T-cell (primary cell): ENCODE measurements at regions of chr1 and their contacts with region 1.

Region 1: DNA sequence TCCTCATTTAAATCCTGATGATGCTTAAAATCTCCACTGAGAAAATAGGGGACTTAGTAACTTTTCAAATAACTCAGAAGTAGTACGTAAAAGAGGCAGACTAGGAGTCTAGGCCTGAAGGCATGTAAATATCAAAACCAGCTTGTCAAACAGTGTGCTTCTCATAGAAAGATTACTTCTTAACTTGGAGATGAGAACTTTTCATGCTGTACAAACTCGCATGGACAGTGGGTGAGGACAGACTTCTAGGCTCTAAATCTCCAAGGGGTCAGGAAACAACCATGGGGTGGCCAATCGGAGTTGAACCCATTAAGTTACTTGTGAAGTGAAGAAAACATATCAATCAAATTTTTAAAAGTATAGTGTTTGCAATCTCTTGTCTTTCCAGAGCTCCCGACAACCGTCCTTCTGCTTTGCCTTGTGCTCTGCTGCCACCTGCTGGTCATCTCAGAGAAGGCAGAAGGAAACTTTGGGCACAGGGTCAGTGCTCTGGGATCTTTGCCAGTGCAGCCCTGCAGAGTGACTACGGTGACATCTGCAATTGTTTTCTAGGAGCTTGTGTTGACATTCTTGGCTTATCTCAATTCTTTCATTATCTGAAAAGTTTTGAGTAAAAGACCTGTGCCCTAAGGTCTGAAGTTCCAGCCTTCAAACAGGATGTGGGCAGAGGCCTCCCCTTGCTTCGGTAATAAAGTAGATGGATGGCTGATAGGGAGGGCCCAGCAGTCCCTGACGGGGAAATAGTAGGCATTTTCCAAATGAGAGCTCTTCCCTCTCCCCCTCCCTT is 105.1 kb upstream of the PDE4B start:
- DNase-seq: peak; percentile 11 to 82 (median 65)
- ATAC-seq: peak; percentile 61 to 72 (median 70)
- H3K4me3 ChIP-seq: no peak overlapping the region
- H3K4me3 Mint-ChIP-seq: no peak overlapping the region
- H3K27ac ChIP-seq: no peak overlapping the region
- H3K27ac Mint-ChIP-seq: no peak overlapping the region
- H3K4me1 ChIP-seq: peaks cover 0 to 5% of the 10 kb centered on the region in 2 experiments
- H3K4me1 Mint-ChIP-seq: peaks cover 6 to 10% (median 7%) of the 10 kb centered on the region in 3 donors
- H3K27me3 ChIP-seq: peaks cover 0 to 8% of the 10 kb centered on the region in 2 experiments
- H3K27me3 Mint-ChIP-seq: peaks cover 13 to 22% of the 10 kb centered on the region in 2 donors

Region 2: DNA sequence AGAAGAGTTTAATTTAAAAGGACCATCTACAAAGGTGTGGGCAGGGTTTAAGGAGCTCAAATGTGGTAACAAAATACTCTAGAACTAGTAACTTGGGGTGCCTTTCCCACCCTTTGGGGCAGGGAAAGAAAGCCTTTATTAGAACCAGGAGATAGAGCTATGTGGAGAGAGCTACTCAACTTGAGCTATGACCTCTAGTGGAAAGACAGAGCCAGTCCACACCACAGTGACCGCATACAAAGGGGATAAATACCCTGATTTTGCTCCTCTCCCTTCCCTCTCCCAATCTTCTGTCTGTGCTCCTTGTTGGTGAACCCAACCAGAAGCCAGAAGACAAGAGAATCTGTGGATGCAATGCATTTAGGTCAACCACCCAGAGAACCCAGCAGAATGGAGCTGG is 666.8 kb before region 1 on chr1:
- CTCF ChIA-PET with region 1: interaction called in 1 of 2 experiments, 10 read pairs
- POLR2A ChIA-PET with region 1: no interaction called
- DNase-seq: no peak
- ATAC-seq: no peak
- H3K4me3 ChIP-seq: no peak overlapping the region
- H3K4me3 Mint-ChIP-seq: no peak overlapping the region
- H3K27ac ChIP-seq: no peak overlapping the region
- H3K27ac Mint-ChIP-seq: no peak overlapping the region
- H3K4me1 ChIP-seq: no peaks in the 10 kb centered on the region
- H3K4me1 Mint-ChIP-seq: peaks cover 7 to 11% (median 7%) of the 10 kb centered on the region in 3 donors
- H3K27me3 ChIP-seq: no peaks in the 10 kb centered on the region
- H3K27me3 Mint-ChIP-seq: no peaks in the 10 kb centered on the region

Region 3: GRCh38 chr1:65213271-65214023 is 474.2 kb before region 1 on chr1:
- CTCF ChIA-PET with region 1: interaction called, 10 to 21 read pairs
- POLR2A ChIA-PET with region 1: no interaction called
- DNase-seq: no peak
- ATAC-seq: no peak
- H3K4me3 ChIP-seq: no peak overlapping the region
- H3K4me3 Mint-ChIP-seq: no peak overlapping the region
- H3K27ac ChIP-seq: no peak overlapping the region
- H3K27ac Mint-ChIP-seq: no peak overlapping the region
- H3K4me1 ChIP-seq: peaks cover 0 to 2% of the 10 kb centered on the region in 2 experiments
- H3K4me1 Mint-ChIP-seq: peaks cover 9 to 12% (median 11%) of the 10 kb centered on the region in 3 donors
- H3K27me3 ChIP-seq: peaks cover 0 to 4% of the 10 kb centered on the region in 2 experiments
- H3K27me3 Mint-ChIP-seq: peaks cover 0 to 1% of the 10 kb centered on the region in 2 donors

Region 4: DNA sequence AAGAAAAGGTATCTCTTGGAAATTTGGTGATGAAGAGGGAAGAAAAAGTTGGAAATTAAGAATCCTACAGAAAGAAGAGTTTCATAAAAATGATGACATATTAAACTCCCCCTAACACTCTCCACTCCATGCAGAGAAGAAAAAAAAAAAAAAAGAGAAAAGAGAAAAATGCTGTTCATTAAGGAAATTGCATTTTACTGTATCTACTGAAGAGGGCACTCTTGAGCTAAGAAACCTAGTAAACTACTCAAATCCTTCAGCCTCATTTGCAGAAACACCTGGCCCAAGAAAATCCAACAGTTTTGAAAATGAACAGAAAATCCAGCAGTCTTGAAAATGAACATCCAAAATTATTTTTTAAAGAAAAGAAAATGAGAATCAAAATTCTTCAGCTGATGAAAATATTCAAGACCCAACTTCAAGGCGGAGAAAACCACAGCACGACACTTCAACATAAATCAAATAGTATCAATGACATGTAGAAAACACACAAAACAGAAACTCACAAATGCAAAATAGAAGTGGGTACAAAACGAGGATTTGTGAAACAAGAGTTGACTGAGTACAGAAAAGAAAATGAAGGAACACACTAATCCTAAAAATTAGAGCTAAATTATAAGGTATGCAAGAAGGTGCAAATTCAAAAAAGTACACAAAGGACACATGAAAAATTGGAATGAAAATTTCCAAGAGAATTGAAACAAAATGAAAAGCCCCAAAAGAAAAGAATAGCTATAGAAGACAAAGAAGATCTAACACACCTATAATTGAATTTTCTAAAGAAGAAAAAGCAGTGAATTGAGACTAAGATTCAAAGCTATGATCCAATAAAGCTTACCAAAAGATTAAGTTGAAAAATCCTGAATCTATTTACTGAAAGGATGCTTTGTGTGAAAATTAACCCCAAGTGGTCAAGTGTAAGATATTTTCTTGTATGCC is 451.5 kb before region 1 on chr1:
- CTCF ChIA-PET with region 1: interaction called, 3 to 28 read pairs
- POLR2A ChIA-PET with region 1: no interaction called
- DNase-seq: peak in 1 of 35 experiments; percentile 47
- ATAC-seq: no peak
- H3K4me3 ChIP-seq: no peak overlapping the region
- H3K4me3 Mint-ChIP-seq: no peak overlapping the region
- H3K27ac ChIP-seq: no peak overlapping the region
- H3K27ac Mint-ChIP-seq: no peak overlapping the region
- H3K4me1 ChIP-seq: no peaks in the 10 kb centered on the region
- H3K4me1 Mint-ChIP-seq: no peaks in the 10 kb centered on the region
- H3K27me3 ChIP-seq: peaks cover 0 to 2% of the 10 kb centered on the region in 2 experiments
- H3K27me3 Mint-ChIP-seq: peaks cover 10 to 17% of the 10 kb centered on the region in 2 donors